Activated T-helper 2 cell treated with anti-CD3 and anti-CD28 coated beads, Interferon-gamma antibody, Interleukin-2, Interleukin-4, amounts not matched to agents 10 μg/mL and 5 μg/mL and 100 μg/mL, durations not matched to agents 14 hours and 24 hours and 36 hours (primary cell): ENCODE measurements at regions of chr1 and their contacts with region 1.

Region 1: DNA sequence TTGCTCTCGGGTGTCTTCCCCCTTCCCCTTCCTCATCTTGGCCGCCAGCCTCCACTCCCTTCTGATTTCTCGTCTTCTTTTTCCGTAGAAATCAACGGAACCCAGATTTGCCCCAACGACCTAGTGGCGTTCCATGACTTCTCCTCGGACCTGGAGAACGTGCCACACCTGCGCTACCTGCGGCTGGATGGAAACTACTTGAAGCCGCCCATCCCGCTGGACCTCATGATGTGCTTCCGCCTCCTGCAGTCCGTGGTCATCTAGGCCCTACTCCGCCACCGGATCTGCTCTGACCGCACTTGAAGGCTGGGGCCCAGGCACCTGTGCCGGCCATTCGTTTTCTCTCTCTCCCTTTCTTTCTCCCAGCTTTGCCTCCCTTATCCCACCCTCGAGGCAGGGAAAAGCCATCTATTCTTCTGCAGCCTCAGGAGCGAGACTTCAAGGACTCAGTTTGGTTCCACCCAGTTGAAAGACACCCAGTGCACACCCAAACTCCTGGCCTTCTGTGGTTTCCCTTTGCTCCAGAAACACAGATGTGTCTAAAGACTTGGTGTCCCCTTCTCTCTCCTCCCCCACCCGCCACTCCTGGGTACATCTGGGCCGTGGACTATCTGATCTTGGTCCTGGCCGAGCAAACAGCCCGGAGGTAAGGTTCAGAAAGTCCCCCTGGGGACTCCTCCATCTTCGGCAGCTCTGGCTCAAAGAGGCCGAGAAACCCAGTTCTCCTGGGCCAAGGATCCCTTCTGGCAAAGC is 7.2 kb upstream of the OPTC start:
- DNase-seq: no peak
- H3K4me3 Mint-ChIP-seq: peak overlapping the region; percentile 73
- H3K27ac Mint-ChIP-seq: no peak overlapping the region
- H3K4me1 Mint-ChIP-seq: no peaks in the 10 kb centered on the region
- H3K27me3 Mint-ChIP-seq: peaks cover 3% of the 10 kb centered on the region

Region 2: GRCh38 chr1:203267347-203267846 is 219.4 kb before region 1 on chr1:
- intact Hi-C with region 1: loop called (anchors 1 kb)
- DNase-seq: peak; percentile 76
- H3K4me3 Mint-ChIP-seq: peak overlapping the region; percentile 83
- H3K27ac Mint-ChIP-seq: peak overlapping the region; percentile 59
- H3K4me1 Mint-ChIP-seq: peaks cover 16% of the 10 kb centered on the region
- H3K27me3 Mint-ChIP-seq: peaks cover 2% of the 10 kb centered on the region

Region 3: GRCh38 chr1:203340112-203340804 is 146.5 kb before region 1 on chr1:
- intact Hi-C with region 1: loop called (anchors 1 kb)
- DNase-seq: peak; percentile 43
- H3K4me3 Mint-ChIP-seq: no peak overlapping the region
- H3K27ac Mint-ChIP-seq: no peak overlapping the region
- H3K4me1 Mint-ChIP-seq: peaks cover 7% of the 10 kb centered on the region
- H3K27me3 Mint-ChIP-seq: peaks cover 27% of the 10 kb centered on the region